GM10248 (cell line): ENCODE measurements at regions of chr6 and their contacts with region 1.

Region 1: GRCh38 chr6:111777357-111777756 is 95.9 kb downstream of the FYN start:
- DNase-seq: no peak
- CTCF ChIP-seq: peak; percentile 14

Region 2: GRCh38 chr6:111793711-111794111 is 16.4 kb after region 1 on chr6:
- CTCF ChIA-PET with region 1: interaction called, 11 read pairs
- POLR2A ChIA-PET with region 1: no interaction called
- DNase-seq: peak; percentile 34
- CTCF ChIP-seq: no peak